Mammary epithelial cell (primary cell): ENCODE measurements at regions of chr5 and their contacts with region 1.

Region 1: DNA sequence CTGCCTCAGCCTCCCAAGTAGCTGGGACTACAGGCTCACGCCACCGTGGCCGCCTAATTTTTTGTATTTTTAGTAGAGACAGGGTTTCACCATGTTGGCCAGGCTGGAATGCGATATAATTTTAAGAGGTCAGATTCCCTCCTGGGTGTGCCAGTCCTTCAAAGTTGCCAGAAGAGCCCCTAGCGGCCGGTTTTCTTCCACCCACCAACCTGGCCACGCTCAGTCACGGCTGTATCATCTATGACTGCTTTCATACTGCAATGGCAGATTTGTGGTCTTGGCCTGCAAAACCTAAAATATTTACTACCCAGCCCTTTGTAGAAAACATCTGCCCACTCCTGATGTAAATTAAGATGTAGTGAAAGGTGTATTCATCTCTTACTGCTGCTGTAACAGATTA is 117.5 kb upstream of the BASP1 start:
- DNase-seq: no peak
- H3K4me3 ChIP-seq: no peak overlapping the region
- H3K27ac ChIP-seq: no peak overlapping the region
- H3K4me1 ChIP-seq: no peaks in the 10 kb centered on the region
- H3K27me3 ChIP-seq: no peaks in the 10 kb centered on the region
- CTCF ChIP-seq: no peak

Region 2: DNA sequence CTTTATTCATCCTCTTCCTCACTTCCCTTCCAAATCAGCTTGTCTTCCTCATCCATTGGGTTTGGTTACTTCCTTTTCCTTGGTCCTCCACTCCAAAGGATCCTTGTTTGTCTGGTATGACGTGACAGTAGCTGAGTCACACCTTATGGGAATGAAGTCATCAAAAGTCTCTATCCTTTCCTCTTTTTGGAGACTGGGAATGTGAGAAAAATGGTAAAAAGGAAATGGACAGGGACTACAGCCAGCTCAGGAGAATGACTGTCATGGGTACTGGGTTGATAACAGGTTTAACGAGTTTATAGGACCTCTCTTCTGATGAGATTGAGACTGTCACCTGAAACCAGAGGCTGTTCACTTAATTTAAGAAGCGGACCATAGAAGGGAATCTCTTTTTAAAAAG is 87.6 kb before region 1 on chr5:
- CTCF ChIA-PET with region 1: no interaction called
- dilution Hi-C with region 1: no loop called
- in situ Hi-C with region 1: no loop called
- intact Hi-C with region 1: no loop called
- DNase-seq: peak; percentile 60
- H3K4me3 ChIP-seq: no peak overlapping the region
- H3K27ac ChIP-seq: no peak overlapping the region
- H3K4me1 ChIP-seq: peaks cover 7% of the 10 kb centered on the region
- H3K27me3 ChIP-seq: no peaks in the 10 kb centered on the region
- CTCF ChIP-seq: no peak

Region 3: GRCh38 chr5:17169507-17169906 is 69.6 kb after region 1 on chr5:
- CTCF ChIA-PET with region 1: no interaction called
- dilution Hi-C with region 1: loop called (anchors 5 kb)
- in situ Hi-C with region 1: no loop called
- intact Hi-C with region 1: no loop called
- DNase-seq: no peak
- H3K4me3 ChIP-seq: no peak overlapping the region
- H3K27ac ChIP-seq: no peak overlapping the region
- H3K4me1 ChIP-seq: no peaks in the 10 kb centered on the region
- H3K27me3 ChIP-seq: no peaks in the 10 kb centered on the region
- CTCF ChIP-seq: no peak